ENCODE measurements at regions of chr2 and their contacts with region 1.

Region 1: DNA sequence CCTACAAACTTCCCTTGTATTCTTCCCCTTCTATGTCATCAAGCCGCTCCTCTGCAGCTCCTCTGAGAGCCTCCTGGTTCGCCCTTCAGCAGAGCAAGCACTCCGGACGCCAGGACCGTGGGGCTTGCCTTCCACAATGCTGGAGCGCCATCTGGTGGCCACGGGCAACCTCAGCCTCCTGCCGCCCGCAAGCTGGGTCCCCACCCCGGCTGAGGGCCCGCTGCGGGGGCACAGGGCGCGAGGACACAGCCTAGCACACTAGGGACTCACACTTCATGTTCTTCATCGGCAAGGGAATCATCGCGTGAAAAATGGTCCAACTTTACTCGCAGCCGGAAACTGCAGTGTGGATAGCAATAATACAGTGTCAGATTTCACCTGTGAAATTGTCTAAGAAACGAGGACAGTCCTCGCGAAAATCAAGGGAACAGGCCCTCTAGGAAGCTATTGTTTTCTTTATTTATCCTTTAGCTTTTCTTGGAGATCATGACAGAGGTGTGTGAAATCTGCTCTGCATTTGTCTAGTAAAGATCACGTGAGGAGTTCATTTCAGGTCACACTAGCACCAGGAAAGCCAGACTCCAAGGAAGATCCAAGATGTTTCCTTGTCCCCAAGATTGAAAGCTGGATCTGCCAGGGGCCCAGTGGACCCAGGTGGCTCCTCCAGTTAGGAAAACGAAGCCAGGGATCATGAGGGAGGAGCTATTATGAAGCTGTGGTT is 5.8 kb downstream of the PRLH start:
- DNase-seq: peak; percentile 66 to 88 (median 81)
- ATAC-seq: peak; percentile 95
- H3K4me3 ChIP-seq: no peak overlapping the region
- H3K4me3 Mint-ChIP-seq: no peak overlapping the region
- H3K27ac ChIP-seq: no peak overlapping the region
- H3K27ac Mint-ChIP-seq: peak overlapping the region in 2 of 9 donors; percentile 20 to 21
- H3K4me1 ChIP-seq: no peaks in the 10 kb centered on the region
- H3K4me1 Mint-ChIP-seq: peaks cover 0 to 7% (median 5%) of the 10 kb centered on the region in 7 donors
- H3K27me3 ChIP-seq: no peaks in the 10 kb centered on the region
- H3K27me3 Mint-ChIP-seq: peaks cover 0 to 6% (median 0%) of the 10 kb centered on the region in 5 donors

Region 2: GRCh38 chr2:235766278-235766677 is 1805.9 kb before region 1 on chr2:
- CTCF ChIA-PET with region 1: no interaction called
- POLR2A ChIA-PET with region 1: no interaction called
- intact Hi-C with region 1: loop called in 1 of 2 experiments (anchors 5 kb)
- DNase-seq: peak in 7 of 9 donors; percentile 29 to 57 (median 38)
- ATAC-seq: peak; percentile 74
- H3K4me3 ChIP-seq: no peak overlapping the region
- H3K4me3 Mint-ChIP-seq: no peak overlapping the region
- H3K27ac ChIP-seq: no peak overlapping the region
- H3K27ac Mint-ChIP-seq: no peak overlapping the region
- H3K4me1 ChIP-seq: no peaks in the 10 kb centered on the region
- H3K4me1 Mint-ChIP-seq: peaks cover 0 to 4% (median 0%) of the 10 kb centered on the region in 7 donors
- H3K27me3 ChIP-seq: no peaks in the 10 kb centered on the region
- H3K27me3 Mint-ChIP-seq: peaks cover 0 to 13% (median 5%) of the 10 kb centered on the region in 5 donors

Region 3: DNA sequence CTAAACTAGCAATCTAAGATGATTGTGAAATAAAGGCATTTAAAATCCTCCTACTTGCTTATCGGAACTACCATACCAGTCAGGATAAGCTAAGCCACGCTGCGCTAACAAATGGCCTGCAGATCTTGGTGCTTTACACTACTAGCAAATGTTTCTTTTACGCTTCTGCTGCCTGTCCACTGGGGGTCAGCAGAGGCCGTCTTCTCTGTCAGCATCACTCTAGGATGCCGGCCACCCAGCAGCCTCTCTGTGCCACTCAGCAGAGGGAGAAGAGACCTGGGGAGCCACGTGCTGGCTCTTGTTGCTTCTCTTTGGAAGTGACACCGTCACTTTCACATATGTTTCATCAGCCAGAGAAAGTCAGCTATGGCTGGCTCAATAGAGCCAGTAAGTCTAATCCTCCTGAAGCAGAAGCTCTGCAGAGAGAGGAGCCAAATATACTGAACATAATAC is 449.9 kb before region 1 on chr2:
- CTCF ChIA-PET with region 1: no interaction called
- POLR2A ChIA-PET with region 1: no interaction called
- intact Hi-C with region 1: loop called (anchors 1 to 10 kb)
- DNase-seq: peak in 6 of 9 donors; percentile 4 to 58 (median 12)
- ATAC-seq: peak; percentile 76
- H3K4me3 ChIP-seq: no peak overlapping the region
- H3K4me3 Mint-ChIP-seq: no peak overlapping the region
- H3K27ac ChIP-seq: no peak overlapping the region
- H3K27ac Mint-ChIP-seq: no peak overlapping the region
- H3K4me1 ChIP-seq: no peaks in the 10 kb centered on the region
- H3K4me1 Mint-ChIP-seq: peaks cover 0 to 3% (median 0%) of the 10 kb centered on the region in 7 donors
- H3K27me3 ChIP-seq: no peaks in the 10 kb centered on the region
- H3K27me3 Mint-ChIP-seq: peaks cover 0 to 4% (median 0%) of the 10 kb centered on the region in 5 donors

Region 4: GRCh38 chr2:237421542-237422116 is 150.6 kb before region 1 on chr2:
- CTCF ChIA-PET with region 1: interaction called, 6 read pairs
- POLR2A ChIA-PET with region 1: no interaction called
- intact Hi-C with region 1: loop called (anchors 1 kb)
- DNase-seq: peak; percentile 57 to 81 (median 71)
- ATAC-seq: peak; percentile 91
- H3K4me3 ChIP-seq: peak overlapping the region; percentile 34
- H3K4me3 Mint-ChIP-seq: peak overlapping the region; percentile 51 to 77 (median 67)
- H3K27ac ChIP-seq: no peak overlapping the region
- H3K27ac Mint-ChIP-seq: peak overlapping the region in 7 of 9 donors; percentile 36 to 81 (median 70)
- H3K4me1 ChIP-seq: peaks cover 9% of the 10 kb centered on the region in 2 donors
- H3K4me1 Mint-ChIP-seq: peaks cover 11 to 58% (median 50%) of the 10 kb centered on the region in 7 donors
- H3K27me3 ChIP-seq: no peaks in the 10 kb centered on the region
- H3K27me3 Mint-ChIP-seq: peaks cover 0 to 11% (median 0%) of the 10 kb centered on the region in 5 donors

Region 5: GRCh38 chr2:237603718-237604362 is 31.7 kb after region 1 on chr2:
- CTCF ChIA-PET with region 1: no interaction called
- POLR2A ChIA-PET with region 1: no interaction called
- intact Hi-C with region 1: loop called (anchors 1 to 2 kb)
- DNase-seq: peak; percentile 39 to 91 (median 84)
- ATAC-seq: peak; percentile 98
- H3K4me3 ChIP-seq: peak overlapping the region; percentile 38
- H3K4me3 Mint-ChIP-seq: peak overlapping the region; percentile 64 to 85 (median 73)
- H3K27ac ChIP-seq: peak overlapping the region; percentile 88
- H3K27ac Mint-ChIP-seq: peak overlapping the region; percentile 93 to 99 (median 97)
- H3K4me1 ChIP-seq: peaks cover 8 to 23% of the 10 kb centered on the region in 2 donors
- H3K4me1 Mint-ChIP-seq: peaks cover 18 to 42% (median 37%) of the 10 kb centered on the region in 7 donors
- H3K27me3 ChIP-seq: no peaks in the 10 kb centered on the region
- H3K27me3 Mint-ChIP-seq: peaks cover 0 to 11% (median 0%) of the 10 kb centered on the region in 5 donors

Measured in naive thymus-derived CD4-positive, alpha-beta T cell (primary cell).